AG04449 (cell line): ENCODE measurements at regions of chr6 and their contacts with region 1.

Region 1: DNA sequence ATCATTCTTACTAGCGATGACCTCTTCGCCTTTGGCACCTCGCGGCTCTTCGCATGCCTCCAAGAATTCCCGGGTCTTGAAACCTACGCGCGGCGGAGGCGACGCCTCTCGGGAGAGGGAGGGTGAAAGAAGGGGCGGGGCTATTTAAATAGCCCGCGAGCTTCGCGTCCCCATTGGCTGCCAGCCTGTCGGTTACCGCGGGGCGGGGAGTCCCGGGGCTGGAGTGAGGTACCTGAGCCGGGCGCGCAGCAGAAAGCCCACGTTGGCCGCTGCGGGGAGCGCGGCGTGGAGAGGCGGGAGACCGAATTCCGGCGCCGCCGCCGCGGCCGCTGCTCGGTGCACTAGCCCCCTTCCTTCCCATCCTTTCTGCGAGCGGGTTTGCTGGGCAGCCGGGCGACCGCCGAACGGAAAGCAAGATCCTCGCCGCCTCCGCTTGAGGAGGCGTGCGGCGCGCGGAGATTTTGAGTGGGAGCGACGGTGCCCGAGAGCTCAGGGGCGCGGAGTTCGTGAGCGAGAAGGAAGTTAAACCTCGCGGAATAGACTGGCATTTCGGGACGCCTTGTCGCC is at the start of gene BMP6:
- DNase-seq: peak; percentile 26
- H3K4me3 ChIP-seq: peak within 1 kb of the TSS; percentile 63
- CTCF ChIP-seq: no peak

Region 2: DNA sequence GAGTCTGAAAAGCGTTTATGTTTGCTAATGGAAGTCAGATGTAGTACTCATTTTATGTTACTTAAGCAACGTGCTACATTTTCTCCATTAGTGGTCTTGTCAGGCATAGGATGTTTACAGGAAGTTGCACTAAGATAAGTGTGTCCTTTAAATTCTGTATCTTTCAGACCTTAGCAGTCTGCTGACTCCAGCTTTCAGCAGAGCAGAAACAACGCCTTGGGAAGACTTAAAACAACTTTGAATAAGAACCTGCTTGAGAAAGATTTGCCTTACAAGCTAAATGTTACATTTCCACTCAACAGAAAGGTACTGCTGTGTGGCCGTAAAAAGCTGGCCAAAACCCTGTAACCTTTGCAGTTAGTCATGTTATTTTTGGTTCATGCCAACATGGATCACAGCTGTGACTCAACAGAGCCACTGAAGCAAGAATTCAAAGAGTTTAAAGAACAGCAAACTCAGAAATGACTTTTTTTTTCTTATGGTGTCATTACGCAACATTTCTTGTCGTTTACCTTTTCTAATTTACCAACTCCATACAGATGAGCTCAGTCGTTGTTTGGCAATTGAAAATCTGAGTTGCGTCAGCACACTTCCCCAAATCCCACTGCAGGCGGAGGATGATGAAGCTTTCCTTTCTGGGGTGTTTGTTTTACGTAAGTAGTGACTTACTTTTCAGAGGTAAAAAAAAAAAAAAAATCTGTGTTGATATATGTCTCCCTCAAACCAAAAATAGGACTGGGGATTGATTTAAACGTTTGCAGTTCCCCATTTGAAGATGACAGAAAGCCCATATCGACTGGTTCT is 27.9 kb before region 1 on chr6:
- CTCF ChIA-PET with region 1: interaction called, 18 read pairs
- POLR2A ChIA-PET with region 1: interaction called, 3 read pairs
- DNase-seq: peak; percentile 61
- H3K4me3 ChIP-seq: peak overlapping the region; percentile 26
- CTCF ChIP-seq: no peak

Region 3: GRCh38 chr6:7742223-7742785 is 16.4 kb after region 1 on chr6:
- CTCF ChIA-PET with region 1: interaction called, 14 read pairs
- POLR2A ChIA-PET with region 1: no interaction called
- DNase-seq: no peak
- H3K4me3 ChIP-seq: no peak overlapping the region
- CTCF ChIP-seq: no peak

Region 4: DNA sequence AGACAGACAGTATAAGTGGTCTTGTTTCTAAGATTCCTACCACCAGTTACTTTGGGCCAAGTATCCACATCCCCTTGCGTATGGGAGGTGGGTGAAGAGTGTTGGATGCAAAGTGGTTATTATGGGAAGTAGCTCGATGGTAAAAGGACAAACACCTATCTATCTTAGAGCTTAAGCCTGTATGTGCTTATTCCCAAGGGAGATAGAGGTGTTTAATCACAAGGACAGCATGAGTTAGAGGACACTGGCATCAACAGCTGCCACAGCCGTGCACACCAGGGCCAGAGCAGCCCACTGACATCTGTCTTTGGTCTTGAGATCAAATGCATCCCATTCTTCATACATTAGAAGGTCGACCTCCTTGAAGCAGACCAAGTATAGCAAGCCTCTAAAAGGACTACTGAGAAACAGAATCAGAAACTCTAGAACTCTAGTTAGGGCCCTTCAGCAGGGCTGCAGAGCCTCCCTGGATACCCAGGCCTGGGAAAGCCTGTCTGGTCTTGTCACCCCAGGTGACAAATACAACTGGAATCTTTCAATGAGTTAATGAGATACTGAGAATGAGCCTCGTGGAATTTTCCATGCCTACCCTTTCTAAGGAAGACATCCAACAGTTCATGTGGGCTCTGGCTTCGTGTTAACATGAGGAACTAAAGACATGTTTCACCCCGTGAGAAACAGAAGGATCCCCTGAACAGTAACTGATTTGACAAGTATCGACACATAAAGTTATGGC is 156.0 kb after region 1 on chr6:
- CTCF ChIA-PET with region 1: interaction called, 15 read pairs
- POLR2A ChIA-PET with region 1: no interaction called
- DNase-seq: no peak
- H3K4me3 ChIP-seq: no peak overlapping the region
- CTCF ChIP-seq: no peak

Region 5: GRCh38 chr6:7992002-7992815 is 266.3 kb after region 1 on chr6:
- CTCF ChIA-PET with region 1: interaction called, 328 read pairs
- POLR2A ChIA-PET with region 1: no interaction called
- DNase-seq: peak; percentile 52
- H3K4me3 ChIP-seq: no peak overlapping the region
- CTCF ChIP-seq: peak; percentile 8

Region 6: GRCh38 chr6:8025191-8025590 is 299.3 kb after region 1 on chr6:
- CTCF ChIA-PET with region 1: interaction called, 13 read pairs
- POLR2A ChIA-PET with region 1: no interaction called
- DNase-seq: no peak
- H3K4me3 ChIP-seq: no peak overlapping the region
- CTCF ChIP-seq: no peak